Psoas muscle (tissue), 8 donors: ENCODE measurements at regions of chr10 and their contacts with region 1.

Region 1: GRCh38 chr10:987870-988666 is at the start of gene GTPBP4:
- DNase-seq: peak; percentile 99 to 100
- ATAC-seq: peak; percentile 98 to 99 (median 98)
- H3K4me3 ChIP-seq: peak within 1 kb of the TSS; percentile 94
- H3K27ac ChIP-seq: peak within 1 kb of the TSS; percentile 96
- H3K4me1 ChIP-seq: peaks cover 20% of the 10 kb centered on the region
- H3K27me3 ChIP-seq: no peaks in the 10 kb centered on the region
- CTCF ChIP-seq: no peak
- total RNA-seq, gene GTPBP4: 36.3 to 77.4 (median 68.5) TPM

Region 2: GRCh38 chr10:1056326-1057105 is 68.4 kb after region 1 on chr10 and contains the start of gene WDR37:
- intact Hi-C with region 1: loop called (anchors 5 kb)
- DNase-seq: peak; percentile 91 to 95
- ATAC-seq: peak; percentile 96 to 97 (median 96)
- H3K4me3 ChIP-seq: peak within 1 kb of the TSS; percentile 96
- H3K27ac ChIP-seq: peak within 1 kb of the TSS; percentile 100
- H3K4me1 ChIP-seq: peaks cover 50% of the 10 kb centered on the region
- H3K27me3 ChIP-seq: no peaks in the 10 kb centered on the region
- CTCF ChIP-seq: no peak
- total RNA-seq, gene WDR37: 17.2 to 28.3 (median 21.4) TPM